RWPE1 (cell line): ENCODE measurements at regions of chr9 and their contacts with region 1.

Region 1: DNA sequence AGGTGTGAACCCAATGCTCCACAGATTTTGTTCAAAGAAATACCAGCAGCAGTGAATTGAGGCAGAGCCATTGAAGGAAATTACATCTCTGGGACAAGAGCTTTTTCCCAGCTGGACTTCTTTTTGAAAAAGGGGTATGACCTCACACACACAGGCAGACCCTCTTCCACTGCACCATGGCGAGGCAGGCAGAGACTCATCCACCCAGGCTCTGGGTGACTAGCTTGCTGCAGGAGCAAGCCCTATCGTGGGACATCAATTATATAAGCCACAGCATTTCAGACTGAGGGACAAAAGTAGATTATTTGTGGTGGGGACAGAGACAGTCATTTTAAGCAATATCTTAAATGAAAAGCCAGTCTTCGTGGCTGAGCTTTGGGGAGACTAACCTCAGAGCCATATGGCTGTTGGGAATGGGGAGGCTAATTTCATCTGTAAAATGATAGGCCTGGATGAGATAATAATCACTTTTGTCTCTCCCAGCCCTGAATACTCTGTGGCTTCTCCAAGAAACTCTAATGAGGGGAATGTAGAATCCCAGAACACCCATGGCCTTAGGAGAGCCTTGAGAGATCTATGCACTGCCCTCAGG is 113.1 kb upstream of the TNC start:
- DNase-seq: no peak
- H3K27ac ChIP-seq: no peak overlapping the region
- CTCF ChIP-seq: no peak

Region 2: GRCh38 chr9:114786251-114786650 is 444.8 kb before region 1 on chr9:
- CTCF ChIA-PET with region 1: no interaction called
- POLR2A ChIA-PET with region 1: no interaction called
- DNase-seq: peak; percentile 48
- H3K27ac ChIP-seq: peak overlapping the region; percentile 88
- CTCF ChIP-seq: no peak

Region 3: DNA sequence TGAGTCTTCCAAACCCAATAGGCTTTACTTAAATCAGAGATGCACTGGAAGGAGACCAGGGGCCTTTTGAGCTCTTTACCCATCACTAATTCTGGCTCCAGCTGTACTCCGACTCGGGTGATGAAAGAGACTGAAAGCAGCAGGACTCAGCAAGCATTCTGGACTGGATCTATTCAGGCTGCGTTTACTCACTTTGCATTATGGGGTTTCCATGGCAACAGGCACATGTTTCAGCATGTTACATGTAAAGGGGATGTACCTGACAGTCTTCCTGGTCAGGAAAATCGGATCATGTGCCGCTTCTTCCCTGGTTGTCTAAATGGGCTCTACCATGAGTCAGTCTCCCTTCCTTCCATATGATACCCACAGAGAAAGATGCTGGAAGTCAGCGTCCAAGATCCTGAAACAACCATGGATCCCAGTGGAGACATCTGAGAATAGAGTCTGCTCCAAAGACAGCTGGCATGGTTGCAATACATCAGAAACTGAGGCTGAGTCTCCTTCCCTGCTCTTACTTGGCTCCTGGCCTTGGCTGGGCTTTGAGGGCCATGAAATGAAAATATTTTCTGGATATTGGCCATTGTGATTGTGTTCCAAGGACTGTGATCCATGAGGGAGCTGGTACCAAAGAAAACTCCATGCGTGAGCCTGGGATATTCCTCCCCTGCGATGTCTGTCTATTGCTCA is 10.6 kb before region 1 on chr9:
- CTCF ChIA-PET with region 1: interaction called, 3 read pairs
- POLR2A ChIA-PET with region 1: interaction called, 11 read pairs
- DNase-seq: peak; percentile 82
- H3K27ac ChIP-seq: no peak overlapping the region
- CTCF ChIP-seq: no peak